ENCODE measurements at regions of chr10 and their contacts with region 1.

Region 1: GRCh38 chr10:58152673-58153263 is 114.9 kb downstream of the IPMK start:
- DNase-seq: peak; percentile 71 to 80
- H3K4me3 ChIP-seq: no peak overlapping the region
- H3K4me3 Mint-ChIP-seq: no peak overlapping the region
- H3K27ac Mint-ChIP-seq: no peak overlapping the region
- H3K4me1 ChIP-seq: no peaks in the 10 kb centered on the region
- H3K4me1 Mint-ChIP-seq: peaks cover 7% of the 10 kb centered on the region
- H3K27me3 ChIP-seq: no peaks in the 10 kb centered on the region
- H3K27me3 Mint-ChIP-seq: peaks cover 15% of the 10 kb centered on the region
- CTCF ChIP-seq: peak; percentile 83 to 85

Region 2: GRCh38 chr10:57579926-57580325 is 572.8 kb before region 1 on chr10:
- CTCF ChIA-PET with region 1: interaction called, 9 read pairs
- POLR2A ChIA-PET with region 1: no interaction called
- intact Hi-C with region 1: loop called (anchors 1 kb)
- DNase-seq: peak in 1 of 2 experiments; percentile 65
- H3K4me3 ChIP-seq: no peak overlapping the region
- H3K4me3 Mint-ChIP-seq: no peak overlapping the region
- H3K27ac Mint-ChIP-seq: no peak overlapping the region
- H3K4me1 ChIP-seq: no peaks in the 10 kb centered on the region
- H3K4me1 Mint-ChIP-seq: no peaks in the 10 kb centered on the region
- H3K27me3 ChIP-seq: no peaks in the 10 kb centered on the region
- H3K27me3 Mint-ChIP-seq: no peaks in the 10 kb centered on the region
- CTCF ChIP-seq: peak; percentile 48 to 61

Region 3: GRCh38 chr10:57716886-57717285 is 435.9 kb before region 1 on chr10:
- CTCF ChIA-PET with region 1: no interaction called
- POLR2A ChIA-PET with region 1: no interaction called
- intact Hi-C with region 1: loop called (anchors 1 kb)
- DNase-seq: peak in 1 of 2 experiments; percentile 49
- H3K4me3 ChIP-seq: no peak overlapping the region
- H3K4me3 Mint-ChIP-seq: no peak overlapping the region
- H3K27ac Mint-ChIP-seq: no peak overlapping the region
- H3K4me1 ChIP-seq: no peaks in the 10 kb centered on the region
- H3K4me1 Mint-ChIP-seq: no peaks in the 10 kb centered on the region
- H3K27me3 ChIP-seq: no peaks in the 10 kb centered on the region
- H3K27me3 Mint-ChIP-seq: peaks cover 7% of the 10 kb centered on the region
- CTCF ChIP-seq: peak; percentile 59 to 81

Region 4: DNA sequence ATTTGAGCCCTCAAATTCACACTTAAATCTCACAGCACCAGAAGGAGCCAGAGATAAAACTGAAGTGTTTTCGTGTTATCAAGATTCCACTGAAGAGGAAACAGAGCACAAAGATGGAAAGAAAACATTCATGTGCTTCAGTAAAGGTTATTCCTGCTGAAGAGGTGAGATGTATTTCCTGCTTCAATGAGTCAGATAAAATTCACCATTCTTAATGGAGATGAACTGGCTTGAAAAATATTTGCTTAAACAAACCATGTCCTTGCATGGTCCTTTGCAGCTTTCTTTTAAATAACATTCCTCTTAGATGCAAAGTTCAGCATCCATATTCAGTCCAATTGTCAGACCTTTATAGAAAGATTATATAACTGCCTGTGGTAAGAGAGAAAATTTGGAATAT is 179.3 kb before region 1 on chr10:
- CTCF ChIA-PET with region 1: no interaction called
- POLR2A ChIA-PET with region 1: no interaction called
- intact Hi-C with region 1: no loop called
- DNase-seq: no peak
- H3K4me3 ChIP-seq: no peak overlapping the region
- H3K4me3 Mint-ChIP-seq: no peak overlapping the region
- H3K27ac Mint-ChIP-seq: no peak overlapping the region
- H3K4me1 ChIP-seq: peaks cover 12% of the 10 kb centered on the region
- H3K4me1 Mint-ChIP-seq: peaks cover 15% of the 10 kb centered on the region
- H3K27me3 ChIP-seq: no peaks in the 10 kb centered on the region
- H3K27me3 Mint-ChIP-seq: peaks cover 4% of the 10 kb centered on the region
- CTCF ChIP-seq: no peak

Region 5: GRCh38 chr10:58023341-58024073 is 129.3 kb before region 1 on chr10:
- CTCF ChIA-PET with region 1: no interaction called
- POLR2A ChIA-PET with region 1: no interaction called
- intact Hi-C with region 1: loop called (anchors 5 kb)
- DNase-seq: peak in 1 of 2 experiments; percentile 29
- H3K4me3 ChIP-seq: no peak overlapping the region
- H3K4me3 Mint-ChIP-seq: no peak overlapping the region
- H3K27ac Mint-ChIP-seq: peak overlapping the region; percentile 83
- H3K4me1 ChIP-seq: peaks cover 16% of the 10 kb centered on the region
- H3K4me1 Mint-ChIP-seq: peaks cover 13% of the 10 kb centered on the region
- H3K27me3 ChIP-seq: no peaks in the 10 kb centered on the region
- H3K27me3 Mint-ChIP-seq: no peaks in the 10 kb centered on the region
- CTCF ChIP-seq: no peak

Region 6: GRCh38 chr10:58177362-58177947 is 24.7 kb after region 1 on chr10:
- CTCF ChIA-PET with region 1: interaction called, 7 read pairs
- POLR2A ChIA-PET with region 1: no interaction called
- intact Hi-C with region 1: loop called (anchors 1 kb)
- DNase-seq: no peak
- H3K4me3 ChIP-seq: no peak overlapping the region
- H3K4me3 Mint-ChIP-seq: no peak overlapping the region
- H3K27ac Mint-ChIP-seq: no peak overlapping the region
- H3K4me1 ChIP-seq: no peaks in the 10 kb centered on the region
- H3K4me1 Mint-ChIP-seq: peaks cover 6% of the 10 kb centered on the region
- H3K27me3 ChIP-seq: no peaks in the 10 kb centered on the region; the same call in 1 of the 2 replicates
- H3K27me3 Mint-ChIP-seq: peaks cover 5% of the 10 kb centered on the region
- CTCF ChIP-seq: peak; percentile 75